Prostate gland (tissue), 2 donors: ENCODE measurements at regions of chr4 and their contacts with region 1.

Region 1: DNA sequence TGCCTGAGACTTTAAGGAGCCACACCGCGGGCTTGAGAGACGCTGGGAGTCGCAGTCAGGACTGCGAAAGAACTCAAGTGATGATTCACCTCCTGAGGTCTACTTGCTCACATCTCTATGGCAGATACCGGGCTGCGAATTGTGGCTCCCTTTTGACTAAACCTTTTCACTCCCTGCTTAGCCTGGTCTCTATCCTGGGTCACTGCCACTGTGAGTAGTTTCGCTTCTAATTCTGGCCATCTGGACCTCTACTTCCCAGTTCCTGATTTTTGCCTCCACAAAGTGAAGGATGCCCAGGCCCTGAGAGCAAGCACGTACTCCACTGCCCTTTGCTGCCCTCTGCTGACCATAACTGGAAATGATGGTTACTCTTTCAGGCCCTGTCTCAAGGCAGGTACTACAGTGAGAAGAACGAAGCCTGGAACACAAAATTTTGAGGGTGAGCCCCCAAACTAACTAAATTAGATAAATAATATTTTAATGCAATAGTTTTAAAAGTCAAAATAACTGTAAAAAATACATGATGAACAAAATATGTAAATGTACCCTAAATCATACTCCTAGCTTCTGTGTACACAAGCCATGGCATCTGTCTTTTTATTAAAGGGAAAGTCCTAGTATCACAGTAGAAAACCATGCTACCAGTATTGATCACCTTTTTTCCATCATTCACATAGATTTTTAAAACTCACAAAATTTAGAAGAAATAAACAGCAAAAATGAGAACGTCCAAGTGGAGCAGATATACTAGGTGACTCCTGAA is 16.7 kb downstream of the MAD2L1 start:
- DNase-seq: peak; percentile 75
- H3K4me3 ChIP-seq: no peak overlapping the region
- H3K27ac ChIP-seq: peak overlapping the region; percentile 10 to 44
- H3K4me1 ChIP-seq: no peaks in the 10 kb centered on the region
- H3K27me3 ChIP-seq: no peaks in the 10 kb centered on the region
- CTCF ChIP-seq: peak; percentile 43 to 81 (median 74)
- POLR2A ChIP-seq: no peak

Region 2: DNA sequence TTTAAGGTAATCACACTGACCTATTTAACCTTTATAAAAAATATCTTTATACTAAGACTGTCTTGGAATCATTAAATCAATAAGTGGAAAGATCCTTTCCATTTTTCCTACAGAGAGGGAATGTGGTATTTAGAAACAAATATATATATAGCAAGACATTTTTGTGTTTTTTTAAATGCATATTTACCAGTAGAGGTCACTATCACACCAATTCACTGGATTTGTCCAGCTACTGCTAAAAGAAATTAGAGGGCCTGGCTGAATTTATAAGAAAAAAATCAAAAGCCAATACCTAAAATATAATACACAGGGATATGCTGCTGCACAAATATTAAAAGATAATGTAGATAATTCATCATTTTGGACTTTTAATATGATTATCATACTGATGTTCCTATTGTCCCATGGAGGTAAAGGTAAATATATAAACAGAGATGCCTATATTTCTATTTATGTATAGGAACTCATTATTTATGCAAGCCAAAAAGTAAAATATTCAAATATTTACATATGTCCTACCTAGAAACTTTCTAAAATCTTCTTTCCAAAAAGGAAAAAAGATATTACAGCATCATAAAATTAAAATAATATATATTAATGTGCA is 490.8 kb before region 1 on chr4:
- intact Hi-C with region 1: loop called (anchors 5 kb)
- DNase-seq: no peak
- H3K4me3 ChIP-seq: no peak overlapping the region
- H3K27ac ChIP-seq: no peak overlapping the region
- H3K4me1 ChIP-seq: no peaks in the 10 kb centered on the region
- H3K27me3 ChIP-seq: no peaks in the 10 kb centered on the region
- CTCF ChIP-seq: peak in 3 of 4 experiments; percentile 32 to 53 (median 51)
- POLR2A ChIP-seq: no peak

Region 3: GRCh38 chr4:119825696-119826095 is 224.2 kb before region 1 on chr4:
- intact Hi-C with region 1: no loop called
- DNase-seq: no peak
- H3K4me3 ChIP-seq: no peak overlapping the region
- H3K27ac ChIP-seq: no peak overlapping the region
- H3K4me1 ChIP-seq: no peaks in the 10 kb centered on the region
- H3K27me3 ChIP-seq: no peaks in the 10 kb centered on the region
- CTCF ChIP-seq: no peak
- POLR2A ChIP-seq: no peak

Region 4: DNA sequence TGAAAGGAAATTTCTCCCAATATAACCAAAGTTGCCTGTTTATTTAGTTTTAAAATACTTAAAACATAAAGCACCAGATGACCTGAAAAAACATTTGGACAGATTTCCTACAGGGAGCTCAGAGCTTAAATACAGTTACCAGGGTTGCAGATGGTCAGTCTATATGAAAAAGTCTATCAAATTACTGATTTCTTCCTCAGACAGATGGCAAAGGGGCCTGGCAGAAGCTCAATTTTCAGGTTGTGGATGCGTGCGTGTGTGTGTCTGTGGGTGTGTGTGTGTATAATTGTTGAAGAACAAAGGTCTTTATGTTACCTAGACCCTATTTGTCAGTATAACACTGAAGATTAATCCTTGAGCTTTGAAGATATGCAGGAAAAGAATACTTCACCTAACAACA is 152.7 kb before region 1 on chr4:
- intact Hi-C with region 1: loop called (anchors 10 kb)
- DNase-seq: no peak
- H3K4me3 ChIP-seq: no peak overlapping the region
- H3K27ac ChIP-seq: no peak overlapping the region
- H3K4me1 ChIP-seq: no peaks in the 10 kb centered on the region
- H3K27me3 ChIP-seq: no peaks in the 10 kb centered on the region
- CTCF ChIP-seq: no peak
- POLR2A ChIP-seq: no peak

Region 5: GRCh38 chr4:119984996-119985395 is 64.9 kb before region 1 on chr4:
- intact Hi-C with region 1: loop called (anchors 10 kb)
- DNase-seq: no peak
- H3K4me3 ChIP-seq: no peak overlapping the region
- H3K27ac ChIP-seq: no peak overlapping the region
- H3K4me1 ChIP-seq: no peaks in the 10 kb centered on the region
- H3K27me3 ChIP-seq: no peaks in the 10 kb centered on the region
- CTCF ChIP-seq: no peak
- POLR2A ChIP-seq: no peak